Activated CD4-positive, alpha-beta T cell treated with anti-CD3 and anti-CD28 coated beads, Interleukin-2, amount 10 ng/mL, durations not matched to agents 24 days and 14 days (primary cell): ENCODE measurements at regions of chr7 and their contacts with region 1.

Region 1: GRCh38 chr7:141533149-141533949 is 17.9 kb upstream of the AGK start:
- DNase-seq: peak; percentile 87
- H3K4me3 Mint-ChIP-seq: no peak overlapping the region
- H3K27ac Mint-ChIP-seq: no peak overlapping the region
- H3K4me1 Mint-ChIP-seq: peaks cover 3% of the 10 kb centered on the region
- H3K27me3 Mint-ChIP-seq: peaks cover 32% of the 10 kb centered on the region

Region 2: DNA sequence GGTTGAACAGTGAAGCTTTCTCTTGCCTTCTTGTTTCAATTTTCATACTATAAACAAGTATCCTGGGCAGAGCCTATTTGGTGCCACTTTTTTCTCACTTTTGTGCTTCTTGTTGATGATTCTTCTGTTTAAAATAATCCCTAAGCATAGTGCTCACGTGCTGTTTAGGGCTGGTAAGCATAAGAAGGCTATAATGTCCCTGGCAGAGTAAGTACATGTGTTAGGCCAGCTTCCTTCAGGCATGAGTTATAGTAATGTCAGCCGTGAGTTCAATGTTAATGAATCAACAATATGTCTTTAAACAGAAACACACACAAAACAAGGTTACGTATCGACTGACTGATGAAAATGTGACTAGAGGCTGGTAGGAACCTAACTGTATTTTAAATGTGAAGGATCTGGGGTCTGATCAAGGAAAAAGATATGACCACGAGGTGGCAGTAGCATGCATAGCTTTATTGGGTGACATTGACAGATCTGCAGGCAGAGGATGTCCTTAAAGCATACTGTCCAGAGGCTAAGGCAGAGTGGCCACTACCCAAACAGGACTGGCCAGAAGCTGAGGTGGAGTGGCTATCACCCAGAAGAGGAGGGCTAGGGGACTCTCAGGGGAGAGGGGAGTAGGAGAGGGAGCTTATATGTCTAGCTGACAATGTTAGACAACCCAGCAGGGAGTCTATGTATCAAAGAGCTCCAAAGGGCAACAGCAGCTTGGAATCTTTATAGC is 722.4 kb before region 1 on chr7:
- intact Hi-C with region 1: loop called (anchors 1 kb)
- DNase-seq: peak; percentile 90
- H3K4me3 Mint-ChIP-seq: no peak overlapping the region
- H3K27ac Mint-ChIP-seq: no peak overlapping the region
- H3K4me1 Mint-ChIP-seq: no peaks in the 10 kb centered on the region
- H3K27me3 Mint-ChIP-seq: no peaks in the 10 kb centered on the region

Region 3: DNA sequence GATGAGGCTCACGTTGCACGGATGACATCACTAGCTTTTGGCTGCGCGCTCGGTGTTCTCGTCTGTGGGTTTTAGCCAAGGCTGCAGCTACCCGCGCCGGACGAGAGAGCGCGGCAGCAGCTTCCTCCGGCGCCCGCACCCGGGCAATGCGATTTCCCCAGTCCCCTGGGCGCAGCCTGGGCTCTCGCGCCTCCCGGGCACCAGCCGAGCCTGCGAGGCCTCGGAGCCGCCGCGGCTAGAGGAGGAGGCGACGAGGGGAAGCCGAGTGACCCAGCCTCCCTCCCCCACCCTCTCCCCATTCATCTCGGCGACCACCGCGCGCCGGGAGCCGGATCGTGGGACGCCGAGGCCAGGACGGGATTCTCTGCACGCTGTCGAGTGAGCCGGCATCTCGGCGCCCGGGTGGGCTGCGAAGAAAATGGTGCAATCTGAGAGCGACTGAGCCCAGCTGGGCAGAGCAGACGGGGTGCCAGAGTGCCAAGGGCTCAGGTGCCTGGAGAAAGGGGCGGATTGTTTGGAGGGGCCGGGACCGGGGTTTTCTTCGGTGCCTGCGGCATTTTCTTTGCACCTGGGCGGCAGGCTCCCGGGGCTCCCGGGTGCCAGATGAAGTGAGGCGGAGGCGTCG is 460.7 kb before region 1 on chr7:
- intact Hi-C with region 1: loop called (anchors 2 kb)
- DNase-seq: peak; percentile 82
- H3K4me3 Mint-ChIP-seq: peak overlapping the region; percentile 83
- H3K27ac Mint-ChIP-seq: no peak overlapping the region
- H3K4me1 Mint-ChIP-seq: peaks cover 19% of the 10 kb centered on the region
- H3K27me3 Mint-ChIP-seq: peaks cover 43% of the 10 kb centered on the region

Region 4: DNA sequence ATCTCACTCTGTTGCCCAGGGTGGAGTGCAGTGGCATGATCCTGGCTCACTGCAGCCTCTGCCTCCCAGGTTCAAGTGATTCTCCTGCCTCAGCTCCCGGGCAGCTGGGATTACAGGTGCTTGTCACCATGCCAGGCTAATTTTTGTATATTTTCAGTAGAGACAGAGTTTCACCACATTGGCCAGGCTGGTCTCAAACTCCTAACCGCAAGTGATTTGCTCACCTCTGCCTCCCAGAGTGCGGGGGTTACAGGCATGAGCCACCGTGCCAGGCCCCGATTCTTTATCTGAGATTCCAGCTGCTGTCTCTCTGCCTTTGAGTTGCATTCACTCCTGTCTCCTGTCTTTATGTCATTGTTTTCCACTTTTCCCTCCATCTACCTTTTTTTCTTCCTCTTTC is 290.8 kb before region 1 on chr7:
- intact Hi-C with region 1: loop called (anchors 10 kb)
- DNase-seq: no peak
- H3K4me3 Mint-ChIP-seq: no peak overlapping the region
- H3K27ac Mint-ChIP-seq: no peak overlapping the region
- H3K4me1 Mint-ChIP-seq: peaks cover 1% of the 10 kb centered on the region
- H3K27me3 Mint-ChIP-seq: peaks cover 4% of the 10 kb centered on the region

Region 5: DNA sequence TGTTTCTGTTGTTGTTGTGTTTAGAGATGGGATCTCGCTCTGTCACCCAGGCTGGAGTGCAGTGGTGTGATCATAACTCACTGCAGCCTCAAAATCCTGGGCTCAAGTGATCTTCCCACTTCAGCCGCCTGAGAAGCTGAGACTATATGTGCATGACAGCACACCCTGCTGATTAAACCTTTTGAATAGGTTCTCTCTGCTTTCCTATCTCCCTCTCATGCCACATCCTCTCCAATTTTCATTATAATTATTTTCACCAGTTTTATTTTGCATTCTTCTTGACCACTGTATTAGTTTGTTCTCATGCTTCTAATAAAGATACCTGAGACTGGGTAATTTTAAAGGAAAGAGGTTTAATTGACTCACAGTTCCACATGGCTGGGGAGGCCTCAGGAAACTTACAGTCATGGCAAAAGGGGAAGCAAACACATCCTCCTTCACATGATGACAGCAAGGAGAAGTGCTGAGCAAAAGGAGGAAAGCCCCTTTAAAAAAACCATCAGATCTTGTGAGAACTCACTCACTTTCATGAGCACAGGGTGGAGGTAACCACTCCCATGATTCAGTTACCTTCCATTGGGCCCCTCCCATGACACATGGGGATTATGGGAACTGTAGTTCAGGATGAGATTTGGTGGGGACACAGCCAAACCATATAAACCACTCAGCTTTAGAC is 30.7 kb after region 1 on chr7:
- intact Hi-C with region 1: no loop called
- DNase-seq: peak; percentile 71
- H3K4me3 Mint-ChIP-seq: peak overlapping the region; percentile 34
- H3K27ac Mint-ChIP-seq: peak overlapping the region; percentile 89
- H3K4me1 Mint-ChIP-seq: peaks cover 60% of the 10 kb centered on the region
- H3K27me3 Mint-ChIP-seq: no peaks in the 10 kb centered on the region

Region 6: DNA sequence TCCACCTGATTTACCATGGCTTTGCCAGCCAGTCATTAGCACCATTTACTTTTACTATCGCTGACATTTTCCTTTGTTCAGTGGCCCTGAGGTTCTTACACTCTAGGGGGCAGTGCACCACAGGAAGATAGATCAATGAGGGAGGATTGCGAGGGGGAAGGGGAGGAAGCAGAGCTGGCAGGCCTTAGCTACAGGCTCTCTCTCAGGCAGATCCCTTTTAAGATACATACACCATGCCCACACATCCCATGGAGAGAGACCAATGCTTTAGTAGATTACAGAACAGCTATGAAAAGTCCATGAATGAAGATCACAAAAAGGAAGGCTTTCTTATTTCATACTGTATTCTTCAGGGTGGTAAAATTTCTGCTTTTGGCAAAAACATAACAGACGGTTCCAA is 121.2 kb after region 1 on chr7:
- intact Hi-C with region 1: loop called (anchors 5 kb)
- DNase-seq: peak; percentile 90
- H3K4me3 Mint-ChIP-seq: no peak overlapping the region
- H3K27ac Mint-ChIP-seq: peak overlapping the region; percentile 73
- H3K4me1 Mint-ChIP-seq: peaks cover 4% of the 10 kb centered on the region
- H3K27me3 Mint-ChIP-seq: no peaks in the 10 kb centered on the region